Activated B cell treated with CpG ODN at 0.5 μM for 24 hours (primary cell): ENCODE measurements at regions of chr17 and their contacts with region 1.

Region 1: GRCh38 chr17:42843358-42843934 is 934 bp upstream of the AOC2 start:
- DNase-seq: no peak
- ATAC-seq: peak; percentile 45
- H3K4me3 Mint-ChIP-seq: no peak overlapping the region
- H3K27ac Mint-ChIP-seq: no peak overlapping the region
- H3K4me1 Mint-ChIP-seq: peaks cover 17% of the 10 kb centered on the region
- H3K27me3 Mint-ChIP-seq: no peaks in the 10 kb centered on the region
- CTCF ChIP-seq: no peak

Region 2: DNA sequence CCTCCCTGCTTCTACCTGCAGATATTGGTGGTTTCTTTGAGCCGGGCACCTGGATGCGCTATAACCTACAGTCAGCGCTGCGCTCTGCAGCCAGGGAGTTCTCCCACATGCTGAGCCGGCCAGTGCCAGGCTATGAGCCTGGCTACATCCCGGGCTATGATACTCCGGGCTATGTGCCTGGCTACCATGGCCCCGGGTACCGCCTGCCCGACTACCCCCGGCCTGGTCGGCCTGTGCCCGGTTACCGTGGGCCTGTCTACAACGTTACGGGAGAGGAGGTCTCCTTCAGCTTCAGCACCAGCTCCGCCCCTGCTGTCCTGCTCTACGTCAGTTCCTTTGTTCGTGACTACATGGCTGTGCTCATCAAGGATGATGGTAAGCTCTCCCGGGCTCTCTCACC is 147.9 kb before region 1 on chr17:
- CTCF ChIA-PET with region 1: no interaction called
- POLR2A ChIA-PET with region 1: no interaction called
- intact Hi-C with region 1: no loop called
- DNase-seq: no peak
- ATAC-seq: no peak
- H3K4me3 Mint-ChIP-seq: no peak overlapping the region
- H3K27ac Mint-ChIP-seq: no peak overlapping the region
- H3K4me1 Mint-ChIP-seq: no peaks in the 10 kb centered on the region
- H3K27me3 Mint-ChIP-seq: no peaks in the 10 kb centered on the region
- CTCF ChIP-seq: no peak

Region 3: DNA sequence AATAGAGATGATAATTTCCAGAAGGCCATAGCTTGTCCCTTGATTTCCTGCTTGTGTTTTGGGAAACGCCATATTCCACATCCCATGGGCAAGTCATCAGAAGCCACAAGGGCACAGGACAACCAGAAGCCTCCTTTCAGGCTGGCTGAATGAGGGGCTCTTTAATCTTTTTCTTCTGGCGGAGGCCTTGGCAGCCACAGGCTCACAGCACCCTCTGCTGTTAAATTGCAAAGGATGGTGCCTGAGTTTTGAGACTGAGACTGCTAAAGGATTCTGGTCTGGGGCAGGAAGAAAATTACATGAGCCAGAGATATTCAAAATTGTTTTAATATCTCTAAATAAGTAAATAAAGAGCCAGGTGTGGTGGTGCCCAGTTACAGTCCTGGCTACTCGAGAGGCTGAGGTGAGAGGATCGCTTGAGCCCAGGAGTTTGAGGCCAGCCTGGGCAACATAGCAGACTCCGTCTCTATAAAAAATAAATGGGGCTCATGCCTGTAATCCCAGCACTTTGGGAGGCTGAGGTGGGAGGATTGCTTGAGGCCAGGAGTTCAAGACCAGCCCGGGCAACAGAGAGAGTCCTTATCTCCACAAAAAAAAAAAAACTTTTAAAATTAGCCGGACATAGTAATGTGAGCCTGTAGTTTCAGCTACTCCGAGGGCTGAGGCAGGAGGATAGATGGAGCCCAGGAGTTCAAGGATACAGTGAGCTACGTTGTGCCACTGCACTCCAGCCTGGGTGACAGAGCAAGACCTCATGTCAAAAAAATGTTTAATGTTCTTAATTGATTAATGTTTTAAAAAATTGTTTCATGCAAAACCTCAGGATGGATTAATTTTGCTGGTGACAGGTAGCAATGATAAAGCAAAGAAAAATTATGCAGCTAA is 94.5 kb after region 1 on chr17:
- CTCF ChIA-PET with region 1: no interaction called
- POLR2A ChIA-PET with region 1: no interaction called
- intact Hi-C with region 1: loop called (anchors 1 kb)
- DNase-seq: no peak
- ATAC-seq: peak; percentile 49
- H3K4me3 Mint-ChIP-seq: no peak overlapping the region
- H3K27ac Mint-ChIP-seq: no peak overlapping the region
- H3K4me1 Mint-ChIP-seq: no peaks in the 10 kb centered on the region
- H3K27me3 Mint-ChIP-seq: no peaks in the 10 kb centered on the region
- CTCF ChIP-seq: no peak